ENCODE measurements at regions of chr3 and their contacts with region 1.

Region 1: DNA sequence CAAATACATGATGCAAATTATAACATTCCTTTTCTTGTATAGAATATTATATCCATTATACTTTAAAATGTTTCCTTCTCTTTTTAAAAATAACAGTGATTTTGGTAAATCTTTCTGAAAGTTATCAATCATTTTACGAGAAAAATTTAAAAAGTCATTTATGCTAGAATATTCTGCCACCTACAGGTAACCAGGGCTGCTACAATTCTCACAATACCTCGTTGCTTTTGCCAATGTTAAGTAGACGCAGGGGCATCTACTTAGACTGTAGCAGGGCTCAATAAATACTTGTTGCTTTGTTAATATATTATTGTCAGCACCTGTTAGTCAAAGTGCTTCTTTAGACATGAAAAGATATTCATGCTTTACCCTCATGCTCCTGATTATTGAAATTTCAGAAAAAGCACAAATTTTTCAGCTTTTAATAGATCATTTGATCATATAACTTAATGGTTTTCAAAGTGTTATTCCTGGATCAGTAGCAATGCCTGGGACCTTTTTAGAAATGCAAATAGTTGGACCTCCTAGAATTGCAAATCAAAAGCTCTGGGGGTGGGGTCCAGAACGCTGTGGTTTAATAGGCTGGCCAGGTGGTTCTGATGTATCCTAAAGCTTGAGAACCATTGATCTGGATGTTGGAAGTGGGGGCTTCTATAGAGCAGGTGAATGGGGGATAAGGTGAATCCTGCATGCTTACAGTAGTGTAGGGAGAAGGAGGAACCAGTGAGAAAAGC is 223.6 kb upstream of the PDZRN3 start:
- DNase-seq: no peak
- H3K4me3 ChIP-seq: no peak overlapping the region
- CTCF ChIP-seq: peak; percentile 54

Region 2: DNA sequence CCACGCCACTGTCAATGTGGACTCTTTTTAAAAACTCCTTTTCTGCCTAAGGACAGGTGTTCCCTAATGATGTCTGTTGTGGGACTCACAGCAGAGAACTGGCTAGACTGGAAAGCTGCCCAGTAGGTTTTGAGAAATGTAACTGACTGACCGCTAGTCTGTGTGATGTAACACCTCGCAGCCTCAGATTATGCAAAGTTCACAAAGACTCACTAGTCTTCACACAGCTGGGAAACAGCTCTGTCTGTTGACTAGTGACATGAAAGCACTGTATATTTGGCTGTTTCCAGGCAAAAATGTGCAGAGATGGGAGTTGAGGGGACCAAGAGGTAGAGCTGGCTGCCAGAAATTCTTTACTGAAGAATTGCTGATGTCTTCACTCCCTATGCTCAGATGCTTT is 233.9 kb before region 1 on chr3:
- CTCF ChIA-PET with region 1: interaction called, 11 read pairs
- POLR2A ChIA-PET with region 1: no interaction called
- DNase-seq: no peak
- H3K4me3 ChIP-seq: no peak overlapping the region
- CTCF ChIP-seq: no peak

Region 3: GRCh38 chr3:73624821-73625665 is 223.3 kb before region 1 on chr3 and contains the start of gene PDZRN3:
- CTCF ChIA-PET with region 1: interaction called, 21 read pairs
- POLR2A ChIA-PET with region 1: no interaction called
- DNase-seq: no peak
- H3K4me3 ChIP-seq: peak within 1 kb of the TSS; percentile 80
- CTCF ChIP-seq: no peak

Region 4: GRCh38 chr3:73827725-73828211 is 20.6 kb before region 1 on chr3:
- CTCF ChIA-PET with region 1: interaction called, 22 read pairs
- POLR2A ChIA-PET with region 1: no interaction called
- DNase-seq: no peak
- H3K4me3 ChIP-seq: no peak overlapping the region
- CTCF ChIP-seq: no peak

Measured in AG04449 (cell line).